OCI-LY7 (cell line): ENCODE measurements at regions of chrX and their contacts with region 1.

Region 1: GRCh38 chrX:42678125-42678524 is 99.8 kb downstream of the PPP1R2C start:
- DNase-seq: peak; percentile 12
- H3K4me3 ChIP-seq: no peak overlapping the region
- H3K27ac ChIP-seq: no peak overlapping the region
- H3K4me1 ChIP-seq: peaks cover 7% of the 10 kb centered on the region
- CTCF ChIP-seq: 0 out of 2 replicates have a peak, but pooled peaks have one; percentile 19

Region 2: DNA sequence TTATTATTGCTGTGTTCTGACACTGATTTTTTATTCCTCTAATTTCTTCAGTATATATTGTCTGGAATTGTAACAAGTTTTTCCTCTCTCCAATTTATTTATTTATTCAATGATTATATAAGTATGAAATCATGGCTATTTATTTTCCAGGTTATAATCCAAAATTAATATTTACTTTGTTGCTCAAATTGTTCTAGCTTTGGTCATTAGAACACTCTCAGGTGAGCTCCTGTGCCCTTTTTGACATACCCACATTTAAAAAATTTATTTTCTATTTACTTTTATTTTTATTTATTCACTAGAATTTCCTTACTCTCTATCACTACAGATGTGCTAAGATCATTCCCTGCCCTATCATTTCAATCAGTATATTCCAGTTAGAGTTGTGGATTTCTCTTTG is 29.6 kb after region 1 on chrX:
- CTCF ChIA-PET with region 1: no interaction called
- POLR2A ChIA-PET with region 1: no interaction called
- intact Hi-C with region 1: loop called (anchors 1 kb)
- DNase-seq: no peak
- H3K4me3 ChIP-seq: no peak overlapping the region
- H3K27ac ChIP-seq: no peak overlapping the region
- H3K4me1 ChIP-seq: no peaks in the 10 kb centered on the region
- CTCF ChIP-seq: no peak